Dorsolateral prefrontal cortex (tissue), 120 donors: ENCODE measurements at regions of chr10 and their contacts with region 1.

Region 1: DNA sequence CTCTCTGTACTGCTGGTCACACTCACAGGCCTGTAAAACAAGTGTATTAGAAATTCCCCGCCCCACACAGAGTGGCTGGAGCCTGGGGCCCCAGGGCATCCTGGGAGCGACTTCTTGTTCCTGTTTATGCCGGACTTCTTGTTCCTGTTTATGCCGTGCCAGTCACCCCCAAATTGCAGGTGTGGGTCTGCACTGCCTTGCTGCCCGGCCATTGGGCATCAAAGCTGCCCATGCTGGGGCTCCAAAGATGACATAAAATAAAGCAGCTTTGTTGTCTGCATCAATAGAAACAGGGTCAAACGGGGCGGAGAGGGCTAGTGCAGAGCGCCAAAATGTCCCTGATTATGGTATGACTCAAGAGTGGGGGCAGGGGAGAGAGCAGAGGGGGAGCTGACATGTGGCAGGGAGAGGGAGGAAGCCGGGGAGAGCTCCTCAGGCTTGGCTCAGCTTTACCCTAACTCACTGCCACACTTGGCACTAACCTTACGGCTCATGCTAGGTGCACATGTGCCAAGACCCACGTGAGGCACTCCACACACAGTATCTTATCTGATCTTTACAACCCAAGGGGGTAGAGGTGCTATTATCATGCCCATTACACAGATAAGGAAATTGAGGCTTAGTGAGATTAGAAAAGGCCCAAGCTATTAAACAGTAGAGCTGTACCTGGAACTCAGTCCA is 98.4 kb downstream of the PIP4K2A start:
- DNase-seq: peak; percentile 23 to 98 (median 91)
- H3K4me3 ChIP-seq: peak overlapping the region in 30 of 59 donors; percentile 1 to 44 (median 26)
- H3K27ac ChIP-seq: peak overlapping the region in 58 of 59 donors; percentile 60 to 98 (median 93)
- H3K27me3 ChIP-seq: no peaks in the 10 kb centered on the region
- CTCF ChIP-seq: peak in 5 of 56 donors; percentile 9 to 27 (median 21)

Region 2: DNA sequence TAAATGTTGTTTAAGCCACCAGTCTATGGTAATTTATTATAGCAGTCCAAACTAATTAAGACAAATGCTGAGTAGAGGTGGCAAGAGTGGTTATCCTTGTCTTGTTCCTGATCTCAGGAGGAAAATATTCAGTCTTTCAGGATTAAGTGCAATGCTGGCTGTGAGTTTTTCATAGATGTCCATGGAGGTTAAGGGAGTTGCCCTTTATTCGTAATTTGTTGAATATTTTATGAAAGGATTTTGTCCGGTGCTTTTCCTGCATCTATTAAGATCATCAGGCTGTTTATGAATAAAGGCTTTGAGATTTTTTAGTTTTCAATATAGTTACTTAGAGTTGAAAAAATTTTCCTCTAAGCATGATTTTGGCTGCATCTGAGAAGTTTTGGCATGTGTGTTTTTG is 88.4 kb before region 1 on chr10:
- intact Hi-C with region 1: no loop called
- DNase-seq: no peak
- H3K4me3 ChIP-seq: no peak overlapping the region
- H3K27ac ChIP-seq: no peak overlapping the region
- H3K27me3 ChIP-seq: no peaks in the 10 kb centered on the region
- CTCF ChIP-seq: no peak

Region 3: DNA sequence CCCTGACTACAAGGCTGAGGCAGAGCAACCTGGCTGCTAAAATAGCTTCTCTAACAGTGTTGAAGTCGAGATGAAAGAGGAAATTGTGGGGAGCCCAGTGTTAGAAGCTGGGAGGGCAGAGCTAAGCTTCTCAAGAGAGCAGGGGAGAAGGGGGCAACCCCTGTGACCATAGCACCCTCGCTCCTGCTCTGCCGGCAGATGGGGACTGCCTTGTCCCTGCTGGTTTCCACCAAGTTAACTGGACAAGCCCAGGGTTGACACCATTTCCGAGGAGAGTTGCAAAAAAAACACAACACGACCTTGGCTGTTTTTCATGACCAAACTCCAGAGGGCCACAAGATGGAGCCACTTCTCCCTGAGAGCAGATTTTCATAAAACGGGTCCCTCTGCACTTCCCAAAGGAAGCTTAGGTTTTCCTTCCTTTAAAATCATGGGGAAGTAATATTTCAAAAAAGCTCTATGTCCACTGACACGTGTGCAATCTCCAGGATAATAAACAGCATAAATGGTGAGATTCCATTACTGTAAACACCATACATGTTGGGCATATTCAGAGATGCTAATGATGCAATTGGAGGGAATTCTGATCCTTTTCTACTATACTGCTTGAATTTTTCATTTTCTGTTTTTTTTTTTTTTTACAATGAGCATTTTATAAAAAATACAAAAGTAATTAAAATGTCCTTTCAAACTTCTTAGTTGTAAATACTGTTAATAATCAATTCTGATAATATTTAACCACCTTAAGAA is 42.0 kb before region 1 on chr10:
- intact Hi-C with region 1: loop called in 1 of 2 experiments (anchors 5 kb)
- DNase-seq: no peak
- H3K4me3 ChIP-seq: no peak overlapping the region
- H3K27ac ChIP-seq: peak overlapping the region in 31 of 59 donors; percentile 2 to 89 (median 54)
- H3K27me3 ChIP-seq: no peaks in the 10 kb centered on the region
- CTCF ChIP-seq: peak in 50 of 56 donors; percentile 6 to 66 (median 45)

Region 4: GRCh38 chr10:22761569-22762220 is 145.7 kb after region 1 on chr10:
- intact Hi-C with region 1: loop called (anchors 5 kb)
- DNase-seq: peak in 9 of 10 donors; percentile 49 to 84 (median 70)
- H3K4me3 ChIP-seq: no peak overlapping the region
- H3K27ac ChIP-seq: peak overlapping the region; percentile 36 to 99 (median 94)
- H3K27me3 ChIP-seq: no peaks in the 10 kb centered on the region
- CTCF ChIP-seq: peak in 10 of 56 donors; percentile 9 to 31 (median 19)

Region 5: DNA sequence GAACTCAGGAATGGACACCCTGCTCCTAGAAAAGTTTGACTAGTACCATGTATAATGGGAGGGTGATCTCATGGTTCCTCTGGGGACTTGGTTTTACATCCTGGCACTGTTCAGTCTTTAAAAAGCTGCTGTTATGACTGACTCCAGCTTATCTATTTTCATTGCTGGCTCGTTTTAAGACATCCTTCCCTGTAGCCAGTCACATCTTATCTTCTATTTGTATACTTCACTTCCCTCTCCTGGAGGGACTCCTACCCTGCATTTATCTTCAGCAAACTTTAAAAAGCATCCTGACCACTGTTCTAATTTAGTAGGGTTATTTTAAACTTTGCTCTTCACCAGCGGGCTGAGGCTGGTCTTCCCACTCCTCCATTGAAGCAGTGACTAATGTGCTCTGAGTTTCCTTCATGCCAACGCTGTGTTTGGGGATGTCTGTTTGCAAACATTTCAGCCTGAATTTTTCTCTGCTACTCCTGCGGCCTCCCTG is 239.0 kb after region 1 on chr10:
- intact Hi-C with region 1: loop called in 1 of 2 experiments (anchors 5 kb)
- DNase-seq: no peak
- H3K4me3 ChIP-seq: no peak overlapping the region
- H3K27ac ChIP-seq: peak overlapping the region in 10 of 59 donors; percentile 0 to 98 (median 14)
- H3K27me3 ChIP-seq: no peaks in the 10 kb centered on the region
- CTCF ChIP-seq: no peak